ENCODE measurements at regions of chr3 and their contacts with region 1.

Region 1: DNA sequence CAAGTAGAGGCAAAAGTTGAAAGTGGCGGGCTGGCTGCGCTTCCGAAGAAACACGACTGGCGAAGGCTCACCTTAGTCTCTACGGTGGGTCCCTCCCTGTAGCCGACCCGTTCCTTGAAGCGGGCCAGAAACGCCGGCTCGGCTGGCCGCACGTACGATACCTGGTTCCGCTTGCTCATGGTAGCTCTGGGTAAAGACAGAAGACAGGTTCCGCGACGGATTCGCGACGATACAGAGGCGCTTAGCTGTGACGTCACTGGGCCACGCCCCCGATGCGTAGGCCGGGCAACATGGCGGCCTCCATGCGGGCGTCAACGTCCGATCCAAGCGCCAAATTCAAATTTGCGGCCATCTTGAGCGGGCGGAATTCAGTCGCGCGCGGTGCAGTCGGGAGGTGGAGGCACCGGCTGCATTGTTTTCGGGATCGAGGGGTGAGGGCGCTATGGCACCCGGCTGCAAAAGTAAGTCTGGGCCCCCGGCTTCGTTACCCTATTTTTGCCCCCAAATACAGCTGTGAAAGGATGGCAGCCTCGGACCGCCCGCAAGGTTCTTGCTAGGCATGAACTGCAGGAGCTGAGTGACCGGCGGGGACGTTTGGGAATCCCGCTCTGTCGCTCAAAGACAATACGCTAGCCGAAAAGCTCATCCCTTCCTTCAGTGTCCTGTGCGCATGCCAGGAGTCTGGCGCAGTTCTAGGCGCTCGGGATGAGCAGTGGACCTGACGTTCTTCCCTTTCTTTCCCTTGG is at the starts of genes KIAA1143 and KIF15:
- DNase-seq: peak; percentile 99
- H3K4me3 Mint-ChIP-seq: peak within 1 kb of the TSS; percentile 97
- H3K27ac Mint-ChIP-seq: peak within 1 kb of the TSS; percentile 85
- H3K4me1 Mint-ChIP-seq: peaks cover 34% of the 10 kb centered on the region
- H3K27me3 Mint-ChIP-seq: no peaks in the 10 kb centered on the region
- total RNA-seq, gene KIAA1143: 40.7 and 47.4 TPM in 2 replicates
- total RNA-seq, gene KIF15: 26.5 and 28.3 TPM in 2 replicates

Region 2: DNA sequence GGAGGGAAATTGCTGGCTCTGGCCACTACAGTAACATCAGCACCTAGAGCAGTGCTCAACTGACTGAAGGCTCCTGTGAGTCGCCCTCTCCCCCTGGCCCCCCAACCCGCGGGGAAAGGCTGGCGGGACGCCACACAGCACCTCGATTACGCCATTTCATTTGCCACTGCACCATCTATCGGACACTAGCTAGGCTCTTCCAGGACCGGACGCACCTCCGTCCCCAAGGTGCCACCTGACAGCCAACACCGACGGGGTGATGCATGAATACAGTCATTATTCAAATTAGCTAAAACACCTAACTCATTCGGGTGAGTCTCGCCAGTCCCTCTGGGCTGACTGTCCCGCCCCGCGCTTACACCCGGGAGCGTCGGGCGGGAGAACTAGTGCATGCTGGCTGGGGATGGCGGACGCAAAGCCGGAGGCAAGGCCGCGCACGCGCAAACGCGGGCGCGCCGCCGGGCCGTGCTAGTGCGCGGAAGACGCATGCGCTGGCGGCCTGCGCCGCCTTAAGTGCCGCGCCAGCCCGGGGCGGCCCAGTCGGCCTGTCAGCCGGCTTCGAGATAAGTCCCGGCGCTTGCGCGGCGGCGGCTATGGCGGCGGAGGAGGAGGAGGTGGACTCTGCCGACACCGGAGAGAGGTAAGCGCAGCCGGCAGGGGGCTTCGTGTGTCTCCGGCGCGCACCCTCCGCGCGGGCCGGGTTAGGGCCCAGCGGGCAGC is 1071.0 kb before region 1 on chr3 and contains the start of gene ABHD5:
- intact Hi-C with region 1: loop called (anchors 5 kb)
- DNase-seq: peak; percentile 98
- H3K4me3 Mint-ChIP-seq: peak within 1 kb of the TSS; percentile 88
- H3K27ac Mint-ChIP-seq: peak within 1 kb of the TSS; percentile 91
- H3K4me1 Mint-ChIP-seq: peaks cover 28% of the 10 kb centered on the region
- H3K27me3 Mint-ChIP-seq: peaks cover 8% of the 10 kb centered on the region
- total RNA-seq, gene ABHD5: 19.0 and 19.5 TPM in 2 replicates

Region 3: DNA sequence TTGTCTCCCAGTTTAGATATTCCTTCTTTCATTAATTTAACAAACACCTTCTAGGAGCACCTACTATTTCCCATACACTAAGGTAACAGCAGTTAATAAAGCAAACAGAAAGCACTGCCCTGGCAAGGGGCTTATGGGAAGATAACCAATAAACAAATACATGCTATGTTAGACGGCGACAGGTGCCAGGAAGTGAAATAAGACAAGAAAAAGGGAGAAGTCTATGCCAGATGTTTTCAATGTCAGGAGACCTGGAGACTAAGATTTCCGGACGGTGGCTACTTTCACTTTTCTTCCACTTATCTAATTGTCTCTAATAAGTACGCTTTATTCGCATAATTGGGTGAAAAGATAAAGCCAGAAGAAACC is 251.6 kb before region 1 on chr3:
- intact Hi-C with region 1: loop called (anchors 10 kb)
- DNase-seq: no peak
- H3K4me3 Mint-ChIP-seq: peak overlapping the region; percentile 88
- H3K27ac Mint-ChIP-seq: peak overlapping the region; percentile 79
- H3K4me1 Mint-ChIP-seq: peaks cover 24% of the 10 kb centered on the region
- H3K27me3 Mint-ChIP-seq: no peaks in the 10 kb centered on the region

Region 4: DNA sequence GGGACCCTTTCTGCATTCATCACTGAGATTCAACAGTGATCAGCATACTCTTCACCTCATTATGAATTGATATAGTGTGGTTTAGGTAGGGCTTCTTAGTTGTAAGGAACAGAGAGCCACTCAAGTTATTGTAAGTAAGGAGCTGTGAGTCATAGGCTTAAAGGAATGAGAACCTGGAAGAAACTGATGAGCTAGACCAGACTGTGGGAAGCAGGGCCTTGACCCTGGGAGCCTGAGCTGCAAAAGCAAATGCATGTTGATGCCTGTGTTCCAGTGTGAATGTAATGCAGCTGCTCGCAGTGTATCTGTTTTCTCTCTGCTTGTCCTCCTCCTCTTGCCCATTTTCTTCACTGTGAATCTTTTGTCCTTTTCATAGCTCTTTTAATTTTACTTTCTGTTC is 193.0 kb before region 1 on chr3:
- intact Hi-C with region 1: no loop called
- DNase-seq: no peak
- H3K4me3 Mint-ChIP-seq: no peak overlapping the region
- H3K27ac Mint-ChIP-seq: no peak overlapping the region
- H3K4me1 Mint-ChIP-seq: no peaks in the 10 kb centered on the region
- H3K27me3 Mint-ChIP-seq: no peaks in the 10 kb centered on the region

Region 5: GRCh38 chr3:44729384-44729910 is 32.1 kb before region 1 on chr3 and contains the start of gene ZNF501:
- intact Hi-C with region 1: loop called (anchors 1 kb)
- DNase-seq: peak; percentile 93
- H3K4me3 Mint-ChIP-seq: peak within 1 kb of the TSS; percentile 95
- H3K27ac Mint-ChIP-seq: peak within 1 kb of the TSS; percentile 81
- H3K4me1 Mint-ChIP-seq: peaks cover 7% of the 10 kb centered on the region
- H3K27me3 Mint-ChIP-seq: no peaks in the 10 kb centered on the region
- total RNA-seq, gene ZNF501: 1.1 and 1.4 TPM in 2 replicates

Region 6: DNA sequence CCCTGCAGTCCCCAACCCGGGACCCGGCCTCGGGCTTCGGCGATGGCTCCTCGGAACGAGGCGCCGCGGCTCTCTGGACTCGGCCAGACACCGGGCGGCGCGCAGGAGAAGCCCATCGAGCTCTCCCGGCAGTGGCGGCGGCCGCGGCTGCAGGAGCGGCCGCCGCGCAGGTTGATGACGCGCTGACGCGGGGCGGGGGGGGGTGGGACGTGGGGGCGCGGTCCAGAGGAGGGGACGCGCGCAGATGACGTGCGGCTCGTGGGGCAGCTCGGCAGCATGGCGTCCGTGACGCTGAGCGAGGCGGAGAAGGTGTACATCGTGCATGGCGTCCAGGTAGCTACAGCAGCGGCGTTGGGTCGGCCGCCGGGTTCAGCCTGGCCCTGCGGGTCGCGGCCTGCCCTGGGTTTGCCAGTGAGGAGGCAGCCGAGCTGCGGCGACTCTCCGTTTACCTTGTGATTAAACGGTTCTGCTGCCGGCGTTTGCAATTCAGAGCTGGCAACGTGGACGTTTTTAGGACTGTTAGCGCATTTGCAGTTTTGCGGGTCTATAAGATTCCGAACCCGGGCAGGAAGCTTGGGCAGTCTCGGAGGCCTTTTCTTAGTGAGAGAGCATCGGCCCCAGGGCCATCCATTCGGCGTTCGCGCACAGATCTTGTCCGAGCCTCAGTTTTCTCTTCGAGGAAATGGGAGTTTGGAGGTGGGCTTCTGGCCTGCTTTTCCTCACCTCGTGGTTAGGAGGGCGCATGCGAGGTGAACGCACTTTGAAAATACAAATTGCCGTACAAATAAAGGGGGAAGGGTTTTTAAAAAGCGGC is 214.6 kb after region 1 on chr3 and contains the starts of genes EXOSC7 and ZDHHC3:
- intact Hi-C with region 1: loop called (anchors 5 kb)
- DNase-seq: peak; percentile 95
- H3K4me3 Mint-ChIP-seq: peak within 1 kb of the TSS; percentile 98
- H3K27ac Mint-ChIP-seq: peak within 1 kb of the TSS; percentile 98
- H3K4me1 Mint-ChIP-seq: peaks cover 50% of the 10 kb centered on the region
- H3K27me3 Mint-ChIP-seq: no peaks in the 10 kb centered on the region
- total RNA-seq, gene EXOSC7: 95.5 and 97.9 TPM in 2 replicates
- total RNA-seq, gene ZDHHC3: 42.0 and 46.2 TPM in 2 replicates

Measured in activated CD4-positive, alpha-beta T cell treated with anti-CD3 and anti-CD28 coated beads, Interleukin-2, amount 10 ng/mL, durations not matched to agents 24 days and 14 days (primary cell).